ENCODE measurements at regions of chr9 and their contacts with region 1.

Region 1: GRCh38 chr9:34376596-34377403 is at the start of gene MYORG:
- DNase-seq: peak; percentile 97
- H3K4me3 Mint-ChIP-seq: peak within 1 kb of the TSS; percentile 88
- H3K27ac Mint-ChIP-seq: peak within 1 kb of the TSS; percentile 32
- H3K4me1 Mint-ChIP-seq: peaks cover 45% of the 10 kb centered on the region
- H3K27me3 Mint-ChIP-seq: peaks cover 13% of the 10 kb centered on the region
- total RNA-seq, gene MYORG: 1.0 and 1.9 TPM in 2 replicates

Region 2: DNA sequence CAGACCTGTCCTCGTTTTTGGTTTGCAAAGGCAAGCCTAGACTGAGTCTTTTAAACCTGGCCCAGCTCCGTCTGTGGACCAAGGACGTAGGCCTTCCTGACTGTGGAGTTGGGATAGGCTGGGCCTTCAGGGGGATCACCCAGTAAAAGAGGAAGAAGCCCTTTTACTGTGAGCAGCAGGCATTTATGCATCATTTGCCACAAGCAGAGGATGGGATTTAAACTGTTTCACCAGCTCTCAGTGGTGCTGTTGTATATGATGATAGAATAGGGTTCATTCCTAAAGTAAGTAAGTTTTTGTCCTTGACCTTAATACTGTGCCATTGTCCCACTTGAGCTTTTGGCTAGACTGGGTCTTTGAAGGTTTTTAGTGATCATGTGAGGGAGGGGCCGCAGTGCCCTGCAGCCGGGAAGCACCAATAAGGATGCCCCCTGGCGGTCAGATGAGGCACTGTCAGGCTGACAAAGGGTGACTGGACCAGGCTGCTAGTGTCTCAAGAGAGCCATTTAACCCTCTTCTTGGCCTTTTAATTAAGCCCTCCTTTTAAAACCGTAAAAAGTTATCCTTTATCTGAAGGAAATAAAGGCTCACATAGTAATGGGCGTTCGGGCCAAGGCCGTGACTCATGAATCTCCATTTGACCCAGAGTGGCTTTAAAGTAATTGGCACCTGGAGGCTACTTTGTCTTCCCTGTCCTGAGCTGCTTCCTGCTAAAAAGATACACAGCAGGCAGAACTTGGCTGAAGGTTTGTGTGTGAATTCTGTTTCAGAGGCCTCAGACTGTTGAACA is 123.9 kb before region 1 on chr9:
- intact Hi-C with region 1: loop called (anchors 1 kb)
- DNase-seq: peak; percentile 50
- H3K4me3 Mint-ChIP-seq: no peak overlapping the region
- H3K27ac Mint-ChIP-seq: no peak overlapping the region
- H3K4me1 Mint-ChIP-seq: peaks cover 15% of the 10 kb centered on the region
- H3K27me3 Mint-ChIP-seq: no peaks in the 10 kb centered on the region

Measured in activated T-helper 1 cell treated with anti-CD3 and anti-CD28 coated beads, Interleukin-12 subunit alpha, Interleukin-12 subunit beta, Interleukin-2, Interleukin-4 antibody, amounts not matched to agents 30 ng/mL and 10 ng/mL and 1 ng/mL, durations not matched to agents 14 hours and 24 hours and 36 hours (primary cell).